Right ventricle myocardium superior (tissue), 1 donor: ENCODE measurements at regions of chr6 and their contacts with region 1.

Region 1: GRCh38 chr6:30489081-30490025 is at the start of gene HLA-E:
- DNase-seq: peak; percentile 93
- ATAC-seq: peak; percentile 98
- total RNA-seq, gene HLA-E: 145 TPM

Region 2: DNA sequence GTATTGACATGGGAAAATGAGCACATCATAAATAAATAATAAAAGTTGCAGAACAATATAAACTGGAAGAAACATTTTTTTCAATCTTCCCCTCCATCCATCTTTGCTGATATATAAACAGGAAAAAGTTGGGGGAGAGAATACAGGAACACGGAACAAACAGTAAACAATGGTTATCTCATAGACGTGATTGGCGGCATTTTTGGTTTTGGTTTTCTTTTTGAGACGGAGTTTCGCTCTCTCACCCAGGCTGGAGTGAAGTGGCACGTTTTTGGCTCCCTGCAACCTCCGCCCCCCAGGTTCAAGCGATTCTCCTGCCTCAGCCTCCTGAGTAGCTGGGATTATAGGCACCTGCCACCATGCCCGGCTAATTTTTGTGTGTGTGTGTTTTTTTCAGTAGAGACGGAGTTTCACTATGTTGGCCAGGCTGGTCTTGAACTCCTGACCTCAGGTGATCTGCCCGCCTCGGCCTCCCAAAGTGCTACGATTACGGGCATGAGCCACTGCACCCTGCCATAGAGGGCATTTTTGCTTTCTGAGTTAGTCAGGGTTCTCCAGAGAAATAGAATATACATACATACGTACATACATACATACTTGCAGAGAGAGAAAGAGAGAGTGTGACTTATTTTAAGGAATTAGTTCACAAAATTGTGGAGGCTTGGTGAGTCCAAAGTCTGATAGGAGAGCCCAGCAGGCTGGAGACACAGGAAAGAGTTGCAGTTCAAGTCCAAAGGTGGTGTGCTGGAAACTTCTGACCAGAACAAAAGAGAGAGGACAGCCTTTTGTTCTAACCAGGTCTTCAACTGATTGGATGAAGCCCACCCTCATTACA is 44.3 kb after region 1 on chr6:
- intact Hi-C with region 1: loop called (anchors 5 kb)
- DNase-seq: no peak
- ATAC-seq: no peak